ENCODE measurements at regions of chr10 and their contacts with region 1.

Region 1: GRCh38 chr10:3043512-3044368 is 23.6 kb upstream of the PFKP start:
- DNase-seq: no peak
- H3K4me3 ChIP-seq: no peak overlapping the region
- H3K27me3 ChIP-seq: 0 out of 2 replicates have a peak, but pooled peaks cover under 1% of the 10 kb centered on the region
- CTCF ChIP-seq: peak; percentile 86

Region 2: DNA sequence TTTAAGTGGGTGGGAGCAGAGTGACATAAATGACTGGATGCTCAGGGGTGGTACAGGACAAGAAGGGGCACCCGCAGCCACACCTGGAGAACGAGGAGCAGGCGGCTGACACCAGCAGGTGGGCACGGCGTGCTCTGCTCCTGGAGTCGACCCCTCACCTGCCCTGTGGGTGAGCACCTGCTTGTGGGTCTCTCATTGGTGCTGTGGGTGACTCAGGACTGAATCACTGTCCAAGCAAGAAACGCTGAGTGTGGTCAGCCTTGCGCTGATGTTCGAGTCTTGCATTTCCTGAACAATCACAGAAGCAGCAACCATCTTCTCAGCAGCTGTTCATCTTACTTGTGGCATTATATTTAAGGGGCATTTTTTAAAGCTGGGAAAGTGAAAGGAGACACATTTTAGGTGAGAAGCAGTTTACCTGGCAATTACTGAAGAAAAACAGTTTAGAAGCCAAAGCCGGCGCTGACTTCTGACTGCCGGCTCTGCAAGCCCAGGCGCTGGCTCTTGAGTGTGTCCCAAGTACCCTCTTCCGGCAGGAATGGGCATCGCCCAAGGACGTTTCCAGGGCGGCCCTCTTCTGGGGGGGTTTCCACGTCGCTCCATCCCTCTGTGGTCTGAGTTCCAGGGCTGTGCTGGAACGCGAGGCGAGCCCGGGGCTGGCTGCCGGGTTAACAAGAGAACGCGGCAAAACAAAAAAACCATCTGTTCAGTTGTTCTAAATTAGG is 121.6 kb before region 1 on chr10:
- CTCF ChIA-PET with region 1: interaction called, 143 read pairs
- POLR2A ChIA-PET with region 1: no interaction called
- DNase-seq: no peak
- H3K4me3 ChIP-seq: no peak overlapping the region
- H3K27me3 ChIP-seq: peaks cover 2% of the 10 kb centered on the region
- CTCF ChIP-seq: no peak

Region 3: GRCh38 chr10:2938869-2939268 is 104.9 kb before region 1 on chr10:
- CTCF ChIA-PET with region 1: interaction called, 40 read pairs
- POLR2A ChIA-PET with region 1: no interaction called
- DNase-seq: no peak
- H3K4me3 ChIP-seq: no peak overlapping the region
- H3K27me3 ChIP-seq: peaks cover 14% of the 10 kb centered on the region
- CTCF ChIP-seq: peak; percentile 23; the same call in 1 of the 2 replicates

Region 4: GRCh38 chr10:2978111-2978510 is 65.6 kb before region 1 on chr10:
- CTCF ChIA-PET with region 1: interaction called, 21 read pairs
- POLR2A ChIA-PET with region 1: no interaction called
- DNase-seq: no peak
- H3K4me3 ChIP-seq: no peak overlapping the region
- H3K27me3 ChIP-seq: no peaks in the 10 kb centered on the region; the same call in 1 of the 2 replicates
- CTCF ChIP-seq: peak; percentile 67

Region 5: DNA sequence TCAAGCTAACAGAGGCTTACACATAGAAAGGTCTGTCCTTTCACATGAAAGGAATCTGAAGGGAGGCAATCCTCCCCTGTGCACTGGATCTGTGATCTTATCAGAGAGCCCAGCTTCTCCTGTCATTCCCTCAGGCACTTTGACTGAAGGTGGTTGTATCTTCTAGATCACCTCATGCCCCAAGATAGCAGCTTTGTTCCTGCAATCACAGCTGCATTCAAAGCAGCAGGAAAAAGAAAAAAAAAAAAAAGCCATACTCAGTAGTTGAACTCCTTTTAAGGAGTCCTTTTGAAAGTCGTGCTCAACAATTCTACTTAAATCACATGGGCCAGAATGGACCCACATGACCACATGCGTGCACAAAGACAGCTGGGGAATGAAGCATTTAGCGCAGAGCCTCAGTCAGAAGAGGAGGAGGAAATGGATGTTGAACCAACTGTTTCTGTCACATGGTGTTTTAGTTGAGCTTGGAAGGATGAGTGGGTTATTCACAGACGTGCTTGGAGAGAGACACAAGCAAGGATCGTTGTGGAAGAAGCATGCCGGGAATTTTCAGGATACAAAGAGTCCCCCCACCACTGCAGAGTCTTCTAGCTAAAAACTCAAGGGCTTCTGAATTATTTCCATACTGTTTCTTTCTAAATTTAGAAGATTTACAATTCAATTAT is 10.6 kb after region 1 on chr10:
- CTCF ChIA-PET with region 1: interaction called, 14 read pairs
- POLR2A ChIA-PET with region 1: no interaction called
- DNase-seq: no peak
- H3K4me3 ChIP-seq: no peak overlapping the region
- H3K27me3 ChIP-seq: no peaks in the 10 kb centered on the region
- CTCF ChIP-seq: no peak